Dorsolateral prefrontal cortex (tissue), 120 donors: ENCODE measurements at regions of chr19 and their contacts with region 1.

Region 1: GRCh38 chr19:35140962-35141637 is 2.0 kb upstream of the FXYD7 start:
- DNase-seq: peak; percentile 81 to 97 (median 94)
- H3K4me3 ChIP-seq: peak overlapping the region; percentile 16 to 80 (median 61)
- H3K27ac ChIP-seq: peak overlapping the region in 55 of 59 donors; percentile 13 to 99 (median 89)
- H3K27me3 ChIP-seq: peaks cover 0 to 3% (median 0%) of the 10 kb centered on the region in 45 donors
- CTCF ChIP-seq: peak in 53 of 56 donors; percentile 15 to 72 (median 48)

Region 2: DNA sequence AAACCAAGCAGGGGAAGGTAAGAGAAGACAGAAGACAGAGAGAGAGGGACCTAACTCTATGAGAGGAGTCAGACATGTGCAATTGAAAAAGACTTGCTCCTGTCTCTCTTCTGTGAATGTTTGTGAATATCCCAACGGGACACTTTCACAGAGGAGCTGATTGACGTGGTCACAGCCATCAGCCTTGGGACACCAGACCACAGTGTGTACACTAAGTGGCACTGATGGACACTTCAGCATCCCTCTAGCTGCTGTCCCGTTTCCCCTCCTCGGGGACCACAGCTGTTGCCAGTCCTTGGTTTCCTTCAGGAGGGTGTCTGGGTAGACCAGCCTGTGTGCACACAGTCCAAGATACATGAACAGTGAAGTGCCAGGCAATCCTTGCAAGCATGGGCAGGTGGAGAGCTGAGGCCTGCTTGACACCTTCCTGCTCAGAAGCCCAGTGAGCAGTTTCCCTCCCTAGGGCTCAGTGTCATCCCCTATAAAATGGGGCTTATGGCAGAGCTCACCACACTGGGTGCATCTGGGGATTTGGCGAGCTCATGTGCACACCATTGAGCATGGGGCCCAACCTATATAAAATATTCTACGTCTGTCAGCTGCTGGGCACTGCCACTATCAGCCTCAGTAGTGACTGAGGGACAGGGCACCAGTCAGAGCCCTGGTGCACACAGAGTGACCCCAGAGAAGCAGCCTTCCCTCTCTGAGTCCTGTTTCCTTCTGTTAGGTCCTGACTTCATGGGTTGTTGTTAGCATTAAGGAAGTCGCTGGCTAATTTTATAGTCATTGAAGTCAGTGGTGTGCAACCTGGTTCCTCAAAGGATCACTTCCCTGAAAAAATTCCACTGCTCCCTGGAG is 123.4 kb after region 1 on chr19:
- intact Hi-C with region 1: loop called (anchors 1 to 2 kb)
- DNase-seq: peak in 8 of 10 donors; percentile 3 to 38 (median 31)
- H3K4me3 ChIP-seq: no peak overlapping the region
- H3K27ac ChIP-seq: peak overlapping the region in 49 of 59 donors; percentile 8 to 99 (median 59)
- H3K27me3 ChIP-seq: no peaks in the 10 kb centered on the region
- CTCF ChIP-seq: no peak